Naive thymus-derived CD4-positive, alpha-beta T cell (primary cell): ENCODE measurements at regions of chr12 and their contacts with region 1.

Region 1: GRCh38 chr12:56636675-56637540 is 6.8 kb upstream of the BAZ2A start:
- DNase-seq: peak; percentile 86 to 99 (median 94)
- ATAC-seq: peak; percentile 83
- H3K4me3 ChIP-seq: peak overlapping the region; percentile 73
- H3K4me3 Mint-ChIP-seq: peak overlapping the region; percentile 87 to 100 (median 96)
- H3K27ac ChIP-seq: peak overlapping the region; percentile 83
- H3K27ac Mint-ChIP-seq: peak overlapping the region; percentile 89 to 99 (median 97)
- H3K4me1 ChIP-seq: peaks cover 27 to 36% of the 10 kb centered on the region in 2 donors
- H3K4me1 Mint-ChIP-seq: peaks cover 28 to 69% (median 57%) of the 10 kb centered on the region in 7 donors
- H3K27me3 ChIP-seq: no peaks in the 10 kb centered on the region
- H3K27me3 Mint-ChIP-seq: no peaks in the 10 kb centered on the region

Region 2: GRCh38 chr12:56315622-56316473 is 321.1 kb before region 1 on chr12 and contains the start of gene CNPY2:
- CTCF ChIA-PET with region 1: no interaction called
- POLR2A ChIA-PET with region 1: no interaction called
- intact Hi-C with region 1: loop called in 1 of 2 experiments (anchors 5 kb)
- DNase-seq: peak; percentile 83 to 94 (median 92)
- ATAC-seq: peak; percentile 93
- H3K4me3 ChIP-seq: peak within 1 kb of the TSS; percentile 100
- H3K4me3 Mint-ChIP-seq: peak within 1 kb of the TSS; percentile 96 to 99 (median 98)
- H3K27ac ChIP-seq: peak within 1 kb of the TSS; percentile 97
- H3K27ac Mint-ChIP-seq: peak within 1 kb of the TSS; percentile 93 to 99 (median 99)
- H3K4me1 ChIP-seq: peaks cover 13 to 16% of the 10 kb centered on the region in 2 donors
- H3K4me1 Mint-ChIP-seq: peaks cover 5 to 23% (median 13%) of the 10 kb centered on the region in 7 donors
- H3K27me3 ChIP-seq: no peaks in the 10 kb centered on the region
- H3K27me3 Mint-ChIP-seq: no peaks in the 10 kb centered on the region
- total RNA-seq, gene CNPY2: 48.4 to 134 (median 87.6) TPM

Region 3: DNA sequence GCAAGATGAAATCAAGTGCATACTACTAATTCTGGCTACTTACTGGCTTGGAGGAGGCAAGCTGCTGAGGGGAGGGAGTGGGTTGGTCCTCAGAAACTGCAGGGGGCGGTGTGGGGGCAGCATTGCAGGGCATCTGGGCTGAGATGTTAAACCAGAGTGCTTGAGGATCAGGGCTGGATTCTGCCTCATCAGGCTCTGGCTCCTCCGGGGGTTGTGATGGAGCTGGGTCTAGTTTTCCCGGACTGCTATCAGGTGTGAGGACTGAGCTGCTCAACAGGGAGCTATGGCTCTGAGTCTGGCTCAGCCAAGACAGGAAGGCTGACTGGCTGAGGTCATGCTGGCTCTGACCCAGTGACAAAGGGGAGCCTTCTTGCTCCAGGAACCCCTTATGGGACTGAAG is 35.4 kb before region 1 on chr12:
- CTCF ChIA-PET with region 1: interaction called, 16 read pairs
- POLR2A ChIA-PET with region 1: interaction called, 3 read pairs
- intact Hi-C with region 1: loop called (anchors 1 kb)
- DNase-seq: peak in 6 of 9 donors; percentile 21 to 46 (median 32)
- ATAC-seq: peak; percentile 53
- H3K4me3 ChIP-seq: no peak overlapping the region
- H3K4me3 Mint-ChIP-seq: no peak overlapping the region
- H3K27ac ChIP-seq: no peak overlapping the region
- H3K27ac Mint-ChIP-seq: peak overlapping the region in 3 of 9 donors; percentile 38 to 59 (median 40)
- H3K4me1 ChIP-seq: no peaks in the 10 kb centered on the region
- H3K4me1 Mint-ChIP-seq: peaks cover 0 to 5% (median 0%) of the 10 kb centered on the region in 7 donors
- H3K27me3 ChIP-seq: no peaks in the 10 kb centered on the region
- H3K27me3 Mint-ChIP-seq: no peaks in the 10 kb centered on the region

Region 4: GRCh38 chr12:56622535-56622934 is 14.4 kb before region 1 on chr12:
- CTCF ChIA-PET with region 1: interaction called, 9 read pairs
- POLR2A ChIA-PET with region 1: interaction called, 88 read pairs
- intact Hi-C with region 1: loop called in 1 of 2 experiments (anchors 2 kb)
- DNase-seq: no peak
- ATAC-seq: no peak
- H3K4me3 ChIP-seq: no peak overlapping the region
- H3K4me3 Mint-ChIP-seq: peak overlapping the region in 4 of 10 donors; percentile 10 to 49 (median 20)
- H3K27ac ChIP-seq: no peak overlapping the region
- H3K27ac Mint-ChIP-seq: peak overlapping the region in 7 of 9 donors; percentile 22 to 62 (median 46)
- H3K4me1 ChIP-seq: peaks cover 17 to 19% of the 10 kb centered on the region in 2 donors
- H3K4me1 Mint-ChIP-seq: peaks cover 34 to 82% (median 64%) of the 10 kb centered on the region in 7 donors
- H3K27me3 ChIP-seq: no peaks in the 10 kb centered on the region
- H3K27me3 Mint-ChIP-seq: no peaks in the 10 kb centered on the region

Region 5: DNA sequence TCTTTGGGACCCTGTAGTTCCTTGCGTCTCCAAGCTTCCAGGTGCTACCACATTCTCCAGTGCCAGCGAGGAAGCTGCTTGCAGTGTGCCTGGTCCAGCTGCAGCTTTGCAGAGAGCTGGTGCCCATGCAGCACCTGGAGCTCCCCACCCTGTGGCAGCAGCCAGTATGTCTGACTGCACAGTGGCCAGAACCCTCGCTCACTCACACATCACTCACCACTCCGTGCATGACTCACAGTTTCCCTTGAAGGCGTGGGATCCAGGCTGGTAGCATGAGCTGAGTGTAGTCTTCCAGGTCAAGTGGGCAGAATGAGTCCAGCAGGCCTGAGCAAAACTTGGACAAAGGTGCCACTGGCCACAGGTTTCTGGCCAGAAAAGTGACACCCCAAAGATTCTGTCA is 263.7 kb after region 1 on chr12:
- CTCF ChIA-PET with region 1: no interaction called
- POLR2A ChIA-PET with region 1: no interaction called
- intact Hi-C with region 1: no loop called
- DNase-seq: no peak
- ATAC-seq: no peak
- H3K4me3 ChIP-seq: no peak overlapping the region
- H3K4me3 Mint-ChIP-seq: no peak overlapping the region
- H3K27ac ChIP-seq: no peak overlapping the region
- H3K27ac Mint-ChIP-seq: no peak overlapping the region
- H3K4me1 ChIP-seq: no peaks in the 10 kb centered on the region
- H3K4me1 Mint-ChIP-seq: no peaks in the 10 kb centered on the region
- H3K27me3 ChIP-seq: no peaks in the 10 kb centered on the region
- H3K27me3 Mint-ChIP-seq: peaks cover 0 to 22% (median 9%) of the 10 kb centered on the region in 5 donors

Region 6: DNA sequence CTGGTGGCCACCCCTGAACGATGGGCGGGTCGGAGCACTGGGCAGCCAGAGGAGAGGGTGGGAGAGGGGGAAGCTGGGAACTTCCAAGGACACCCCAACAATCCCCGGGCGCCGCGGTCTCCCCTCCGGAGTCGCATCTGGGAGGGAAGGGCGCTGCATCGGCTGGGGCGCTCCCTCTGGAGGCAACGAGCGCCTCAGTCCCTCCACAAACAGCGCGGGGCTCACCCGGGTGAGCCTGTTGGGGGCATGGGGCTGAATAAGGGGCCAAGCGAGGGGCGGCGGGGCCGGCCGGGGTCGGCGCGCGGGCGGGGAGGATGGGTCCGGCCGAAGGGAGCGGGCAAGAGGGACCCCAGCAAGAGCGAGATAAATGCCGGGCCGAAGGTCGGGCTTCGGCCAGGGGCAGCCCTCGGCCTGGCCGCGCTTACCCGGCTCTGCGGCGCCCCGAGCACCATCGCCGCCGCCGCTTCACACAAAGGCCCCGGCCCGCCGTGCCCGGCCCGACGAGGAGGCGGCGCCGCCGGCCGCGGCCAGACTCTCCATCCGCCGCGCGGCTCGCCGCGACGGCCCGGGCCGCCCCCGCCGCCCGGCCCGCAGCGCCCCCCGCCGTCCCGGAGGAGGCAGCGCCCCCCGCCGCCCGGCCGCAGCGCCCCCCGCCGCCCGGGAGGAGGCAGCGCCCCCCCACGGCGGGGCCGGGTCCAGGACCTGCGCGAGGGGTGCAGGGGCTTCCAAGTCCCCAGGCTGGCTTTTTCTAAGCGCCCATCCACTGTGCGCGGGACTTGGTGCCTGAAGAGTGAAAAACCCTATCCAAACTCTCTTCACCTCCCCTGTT is 369.3 kb after region 1 on chr12 and contains the start of gene ZBTB39:
- CTCF ChIA-PET with region 1: interaction called, 4 read pairs
- POLR2A ChIA-PET with region 1: no interaction called
- intact Hi-C with region 1: loop called (anchors 5 kb)
- DNase-seq: peak; percentile 51 to 84 (median 62)
- ATAC-seq: peak; percentile 91
- H3K4me3 ChIP-seq: peak within 1 kb of the TSS; percentile 63
- H3K4me3 Mint-ChIP-seq: peak within 1 kb of the TSS; percentile 90 to 94 (median 92)
- H3K27ac ChIP-seq: peak within 1 kb of the TSS; percentile 82
- H3K27ac Mint-ChIP-seq: peak within 1 kb of the TSS; percentile 92 to 95 (median 95)
- H3K4me1 ChIP-seq: peaks cover 20 to 46% of the 10 kb centered on the region in 2 donors
- H3K4me1 Mint-ChIP-seq: peaks cover 36 to 80% (median 76%) of the 10 kb centered on the region in 7 donors
- H3K27me3 ChIP-seq: no peaks in the 10 kb centered on the region
- H3K27me3 Mint-ChIP-seq: no peaks in the 10 kb centered on the region
- total RNA-seq, gene ZBTB39: 5.8 to 12.9 (median 10.7) TPM